ENCODE measurements at regions of chr22 and their contacts with region 1.

Region 1: DNA sequence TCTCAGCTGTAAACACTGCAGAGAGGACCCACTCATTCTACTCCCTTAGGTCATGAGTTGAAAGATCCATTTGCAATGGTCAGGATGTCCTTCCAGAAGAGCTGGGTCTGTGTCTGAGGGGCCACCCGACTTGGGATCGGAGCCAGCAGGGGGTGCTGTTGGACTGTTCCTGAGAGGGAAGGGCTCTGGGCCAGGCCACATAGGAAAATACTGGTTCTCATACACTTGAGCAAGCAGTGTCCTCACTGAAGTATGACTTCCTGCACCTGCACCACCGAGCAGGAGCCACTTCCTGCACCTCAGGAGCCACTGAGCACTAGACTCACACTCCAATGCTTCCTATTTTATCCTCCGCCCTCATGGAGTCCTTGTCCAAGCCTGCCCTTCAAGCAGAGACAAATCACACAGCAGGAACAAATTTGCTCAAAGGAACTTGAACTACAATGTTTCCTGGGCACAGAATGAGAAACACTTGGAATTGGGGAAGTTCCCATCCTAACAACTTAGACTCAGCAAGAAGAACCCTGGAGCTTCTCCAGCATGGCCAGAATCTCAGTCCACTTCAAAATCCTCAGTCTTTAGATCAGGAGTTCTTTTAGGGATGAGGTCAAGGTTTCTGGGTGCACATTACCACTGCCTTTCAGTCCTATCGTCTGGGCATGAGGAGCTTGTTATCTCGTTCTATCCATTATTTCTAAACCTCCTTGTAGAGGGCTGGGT is 36.6 kb upstream of the VPREB1 start:
- DNase-seq: peak; percentile 91
- ATAC-seq: peak; percentile 78
- H3K4me3 Mint-ChIP-seq: peak overlapping the region; percentile 19
- H3K27ac Mint-ChIP-seq: peak overlapping the region; percentile 83
- H3K4me1 Mint-ChIP-seq: peaks cover 43% of the 10 kb centered on the region
- H3K27me3 Mint-ChIP-seq: peaks cover 2% of the 10 kb centered on the region

Region 2: GRCh38 chr22:22087854-22088657 is 119.9 kb before region 1 on chr22:
- CTCF ChIA-PET with region 1: no interaction called
- DNase-seq: no peak
- ATAC-seq: no peak
- H3K4me3 Mint-ChIP-seq: no peak overlapping the region
- H3K27ac Mint-ChIP-seq: no peak overlapping the region
- H3K4me1 Mint-ChIP-seq: peaks cover 10% of the 10 kb centered on the region
- H3K27me3 Mint-ChIP-seq: peaks cover 37% of the 10 kb centered on the region

Region 3: DNA sequence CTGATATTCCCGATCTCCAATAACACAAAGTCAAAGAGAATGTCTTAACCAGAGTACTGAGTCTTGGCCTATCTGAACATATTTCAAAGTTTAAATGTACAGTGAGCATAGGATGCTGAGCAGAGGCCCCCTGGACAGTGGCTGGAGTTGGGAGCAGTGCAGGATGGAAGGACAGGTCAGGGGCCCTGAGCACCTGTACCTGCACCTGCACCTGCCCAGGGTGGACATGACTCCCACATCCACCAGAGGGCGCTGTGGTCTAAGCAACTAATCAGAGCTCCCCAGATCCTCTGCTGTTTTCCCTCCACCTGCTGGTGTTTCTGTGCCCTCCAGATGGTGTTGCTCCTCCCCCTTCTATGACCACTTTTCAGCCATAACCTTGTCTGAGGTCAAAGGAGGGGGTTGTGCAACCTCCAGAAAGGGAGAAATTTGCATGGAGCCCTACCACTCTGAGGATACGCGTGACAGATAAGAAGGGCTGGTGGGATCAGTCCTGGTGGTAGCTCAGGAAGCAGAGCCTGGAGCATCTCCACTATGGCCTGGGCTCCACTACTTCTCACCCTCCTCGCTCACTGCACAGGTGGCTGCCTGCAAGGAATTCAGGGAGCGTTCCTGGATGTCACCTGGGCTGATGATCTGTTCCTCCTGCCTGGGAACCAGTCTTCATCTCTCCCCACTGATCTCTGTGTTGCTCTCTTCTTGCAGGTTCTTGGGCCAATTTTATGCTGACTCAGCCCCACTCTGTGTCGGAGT is 12.6 kb before region 1 on chr22:
- CTCF ChIA-PET with region 1: interaction called, 32 read pairs
- DNase-seq: peak; percentile 86
- ATAC-seq: peak; percentile 93
- H3K4me3 Mint-ChIP-seq: no peak overlapping the region
- H3K27ac Mint-ChIP-seq: no peak overlapping the region
- H3K4me1 Mint-ChIP-seq: peaks cover 14% of the 10 kb centered on the region
- H3K27me3 Mint-ChIP-seq: peaks cover 29% of the 10 kb centered on the region

Region 4: GRCh38 chr22:22327723-22328122 is 119.7 kb after region 1 on chr22:
- CTCF ChIA-PET with region 1: interaction called, 17 read pairs
- DNase-seq: no peak
- ATAC-seq: no peak
- H3K4me3 Mint-ChIP-seq: no peak overlapping the region
- H3K27ac Mint-ChIP-seq: no peak overlapping the region
- H3K4me1 Mint-ChIP-seq: peaks cover 5% of the 10 kb centered on the region
- H3K27me3 Mint-ChIP-seq: peaks cover 21% of the 10 kb centered on the region